AG04450 (cell line): ENCODE measurements at regions of chr3 and their contacts with region 1.

Region 1: DNA sequence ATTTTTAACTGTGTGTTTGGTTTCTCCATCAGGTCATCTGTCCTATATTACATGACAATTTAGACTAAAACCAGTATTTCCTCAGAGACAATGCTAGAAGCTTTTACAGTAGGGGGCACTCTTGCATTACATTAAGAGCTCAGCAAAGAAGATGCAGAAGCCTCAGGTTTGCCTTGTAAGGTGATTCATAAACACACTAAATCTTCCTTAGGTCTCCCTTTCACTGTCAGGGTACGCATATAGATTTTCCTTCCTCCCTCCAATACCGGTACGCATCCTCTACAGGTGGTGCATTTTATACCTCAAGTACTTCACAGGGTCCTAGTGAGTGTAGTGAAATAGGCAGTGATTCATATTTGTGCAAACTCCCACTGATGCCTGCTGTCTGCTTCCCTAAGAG is 46.5 kb downstream of the CD86 start:
- DNase-seq: peak; percentile 24
- H3K4me3 ChIP-seq: no peak overlapping the region
- H3K27ac ChIP-seq: no peak overlapping the region
- H3K27me3 ChIP-seq: peaks cover 6% of the 10 kb centered on the region
- CTCF ChIP-seq: peak; percentile 70

Region 2: GRCh38 chr3:121545574-121546455 is 555.8 kb before region 1 on chr3 and contains the start of gene POLQ:
- CTCF ChIA-PET with region 1: interaction called, 16 read pairs
- POLR2A ChIA-PET with region 1: no interaction called
- DNase-seq: peak; percentile 85
- H3K4me3 ChIP-seq: peak within 1 kb of the TSS; percentile 82
- H3K27ac ChIP-seq: no peak within 1 kb of the TSS
- H3K27me3 ChIP-seq: no peaks in the 10 kb centered on the region
- CTCF ChIP-seq: no peak
- polyA plus RNA-seq, gene POLQ: 0.96 and 1.4 TPM in 2 replicates

Region 3: GRCh38 chr3:122076491-122077292 is 25.0 kb before region 1 on chr3:
- CTCF ChIA-PET with region 1: no interaction called
- POLR2A ChIA-PET with region 1: no interaction called
- DNase-seq: no peak
- H3K4me3 ChIP-seq: no peak overlapping the region
- H3K27ac ChIP-seq: no peak overlapping the region
- H3K27me3 ChIP-seq: peaks cover 6% of the 10 kb centered on the region
- CTCF ChIP-seq: no peak

Region 4: DNA sequence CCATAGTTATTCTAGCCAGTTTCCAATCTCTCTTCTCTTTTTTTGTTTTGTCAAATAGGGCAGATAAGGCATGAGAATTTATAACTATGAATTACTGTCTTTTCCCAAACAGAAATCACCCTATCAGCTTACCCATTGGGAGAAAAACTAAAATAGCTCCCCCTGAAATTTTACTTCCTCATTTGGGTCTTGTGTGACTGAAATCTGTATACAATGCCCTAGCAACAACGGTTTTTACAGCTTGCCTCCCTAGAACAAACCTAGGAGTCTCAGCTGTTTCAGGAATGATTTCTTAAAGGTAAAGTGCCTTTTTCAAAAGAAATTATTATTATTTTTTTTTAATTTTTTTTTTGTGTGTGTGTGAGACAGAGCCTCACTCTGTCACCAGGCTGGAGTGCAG is 10.3 kb after region 1 on chr3:
- CTCF ChIA-PET with region 1: interaction called, 10 read pairs
- POLR2A ChIA-PET with region 1: no interaction called
- DNase-seq: no peak
- H3K4me3 ChIP-seq: no peak overlapping the region
- H3K27ac ChIP-seq: no peak overlapping the region
- H3K27me3 ChIP-seq: no peaks in the 10 kb centered on the region
- CTCF ChIP-seq: no peak

Region 5: GRCh38 chr3:122251428-122251827 is 149.8 kb after region 1 on chr3:
- CTCF ChIA-PET with region 1: interaction called, 15 read pairs
- POLR2A ChIA-PET with region 1: no interaction called
- DNase-seq: no peak
- H3K4me3 ChIP-seq: no peak overlapping the region
- H3K27ac ChIP-seq: no peak overlapping the region
- H3K27me3 ChIP-seq: no peaks in the 10 kb centered on the region
- CTCF ChIP-seq: no peak

Region 6: DNA sequence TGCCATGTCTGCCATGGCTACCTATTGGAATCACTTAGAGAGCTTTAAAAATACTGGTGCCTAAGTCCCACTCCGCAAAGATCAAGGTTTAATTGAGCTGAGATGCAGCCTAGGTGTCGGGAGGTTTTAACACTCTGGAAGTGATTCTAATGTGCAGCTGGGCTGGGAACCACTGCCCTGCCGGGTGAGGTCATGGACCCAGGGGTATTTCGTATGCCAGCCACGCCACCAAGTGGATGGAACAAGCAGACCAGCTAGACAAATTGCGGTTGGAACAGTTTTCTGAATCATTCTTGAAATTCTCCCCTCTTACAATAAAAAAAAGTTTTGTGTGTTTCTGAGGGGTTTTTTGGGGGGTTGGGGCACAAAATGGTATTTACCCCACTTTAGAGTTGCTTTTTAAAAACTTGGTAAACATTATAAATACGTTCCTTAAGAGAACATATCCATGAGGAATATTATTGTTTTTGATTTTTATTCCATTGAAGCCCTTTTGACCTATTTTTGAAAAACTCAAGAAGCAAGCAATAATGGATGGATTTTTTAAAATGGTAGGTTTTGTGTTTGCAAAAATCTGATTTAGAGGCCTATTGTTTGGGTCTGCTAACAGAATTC is 157.2 kb after region 1 on chr3:
- CTCF ChIA-PET with region 1: interaction called, 68 read pairs
- POLR2A ChIA-PET with region 1: no interaction called
- DNase-seq: peak; percentile 7
- H3K4me3 ChIP-seq: no peak overlapping the region
- H3K27ac ChIP-seq: no peak overlapping the region
- H3K27me3 ChIP-seq: peaks cover 7% of the 10 kb centered on the region
- CTCF ChIP-seq: peak; percentile 61

Region 7: GRCh38 chr3:122299872-122300460 is 198.3 kb after region 1 on chr3:
- CTCF ChIA-PET with region 1: interaction called, 14 read pairs
- POLR2A ChIA-PET with region 1: no interaction called
- DNase-seq: no peak
- H3K4me3 ChIP-seq: no peak overlapping the region
- H3K27ac ChIP-seq: no peak overlapping the region
- H3K27me3 ChIP-seq: no peaks in the 10 kb centered on the region
- CTCF ChIP-seq: peak; percentile 60

Region 8: DNA sequence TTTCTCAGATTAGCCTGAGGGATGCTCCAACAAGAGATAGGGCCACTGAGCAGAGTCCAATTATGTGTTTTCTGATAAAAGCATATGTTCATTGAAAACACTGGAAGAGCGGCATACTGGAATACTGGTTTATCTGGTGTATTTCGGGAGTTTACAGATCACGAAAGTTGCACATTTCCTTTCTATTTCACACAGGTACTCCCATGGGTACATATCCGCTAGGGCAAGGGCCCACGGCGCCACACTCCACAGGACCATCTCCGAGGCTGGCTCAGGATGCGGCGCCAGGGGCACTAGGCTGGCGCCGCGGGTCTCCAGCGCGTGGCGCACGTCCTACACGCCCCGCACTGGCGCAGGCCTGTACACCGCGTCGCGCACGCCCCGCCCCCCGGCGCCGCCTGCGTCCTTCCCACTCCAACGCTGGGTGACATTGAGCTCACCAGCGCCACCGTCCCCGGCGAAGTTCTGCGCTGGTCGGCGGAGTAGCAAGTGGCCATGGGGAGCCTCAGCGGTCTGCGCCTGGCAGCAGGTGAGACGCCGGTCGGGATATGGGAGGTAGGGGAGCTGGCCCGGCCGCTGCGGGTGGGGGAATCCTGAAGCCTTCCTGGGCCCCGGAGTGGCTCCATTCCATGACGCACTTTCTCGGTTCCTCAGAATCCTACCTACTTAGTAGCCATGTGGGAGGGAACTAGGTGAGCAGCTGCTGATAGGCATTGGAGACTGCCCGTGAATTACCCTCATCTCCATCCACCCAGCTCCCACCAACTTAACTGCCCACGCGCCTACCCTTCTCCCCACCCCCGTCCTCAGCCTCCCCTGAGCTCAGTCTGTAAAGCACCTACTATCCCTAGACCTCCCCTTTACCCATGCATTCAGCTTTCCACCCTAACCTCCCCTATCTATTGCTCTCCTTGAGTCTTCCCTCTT is 282.4 kb after region 1 on chr3 and contains the start of gene FAM162A:
- CTCF ChIA-PET with region 1: interaction called, 11 read pairs
- POLR2A ChIA-PET with region 1: no interaction called
- DNase-seq: no peak
- H3K4me3 ChIP-seq: peak within 1 kb of the TSS; percentile 96
- H3K27ac ChIP-seq: peak within 1 kb of the TSS; percentile 53
- H3K27me3 ChIP-seq: no peaks in the 10 kb centered on the region
- CTCF ChIP-seq: peak; percentile 38
- polyA plus RNA-seq, gene FAM162A: 58.3 and 61.6 TPM in 2 replicates